HEK293T (cell line): ENCODE measurements at regions of chr19 and their contacts with region 1.

Region 1: DNA sequence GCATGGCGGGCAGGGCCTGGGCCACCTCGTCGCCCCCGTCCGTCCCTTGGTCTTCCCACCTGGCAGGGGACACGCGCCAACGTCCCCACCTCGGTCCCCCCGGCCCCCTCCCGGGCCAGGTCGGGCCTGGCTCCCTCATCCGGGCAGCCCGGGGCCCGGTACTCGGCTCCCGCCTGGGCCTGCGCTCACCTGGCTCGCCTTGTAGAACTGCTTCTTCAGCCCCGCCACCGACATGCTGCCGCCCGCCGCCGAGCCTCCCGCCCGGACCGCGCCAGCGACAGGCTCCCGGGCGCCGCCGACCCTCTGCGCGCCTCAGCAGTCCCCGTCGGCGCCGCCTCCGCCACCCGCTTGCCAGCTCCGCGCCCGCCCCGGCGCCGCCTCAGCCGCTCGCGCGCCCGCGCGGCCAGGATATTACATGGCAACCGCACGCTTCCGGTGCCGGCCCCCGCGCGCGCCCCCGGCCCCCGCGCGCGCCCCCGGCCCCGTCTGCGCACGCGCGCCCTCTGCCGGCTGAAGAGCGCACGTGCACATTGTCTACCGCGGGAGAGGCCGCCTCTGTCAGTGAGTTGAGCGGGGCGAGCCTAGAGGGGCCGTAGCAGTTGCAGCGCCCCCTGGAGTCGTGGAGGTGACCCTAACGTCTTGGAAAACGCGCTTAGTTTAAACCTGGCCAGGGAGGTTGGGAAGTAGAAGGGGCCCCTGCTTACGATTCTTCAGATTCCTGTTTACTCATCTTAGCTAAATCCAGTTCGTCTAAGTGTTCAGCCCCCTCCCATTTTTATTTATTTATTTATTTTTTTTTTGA is at the start of gene SH3GL1:
- DNase-seq: peak; percentile 89

Region 2: GRCh38 chr19:4375164-4376027 is 24.9 kb before region 1 on chr19:
- CTCF ChIA-PET with region 1: interaction called, 13 read pairs
- POLR2A ChIA-PET with region 1: interaction called, 6 read pairs
- DNase-seq: peak; percentile 55

Region 3: DNA sequence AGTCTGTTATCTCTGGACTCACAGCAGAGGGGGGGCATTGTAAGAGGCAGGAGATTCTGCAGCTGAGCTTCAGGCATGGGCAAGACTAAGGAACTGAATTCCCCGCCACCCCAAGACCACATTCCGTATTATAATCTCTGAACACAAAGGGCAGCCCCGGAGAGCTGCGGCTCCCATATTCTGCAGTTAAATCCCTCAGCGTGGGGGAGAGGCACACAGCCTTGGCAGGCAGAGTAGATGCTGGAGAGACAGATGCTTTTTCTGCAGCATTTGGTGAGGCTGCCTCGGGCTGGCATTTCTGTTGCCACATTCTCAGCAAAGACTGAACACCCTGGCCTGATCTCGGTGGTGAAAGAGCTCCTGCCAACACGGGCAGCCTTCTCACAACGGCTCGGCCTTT is 15.0 kb after region 1 on chr19:
- CTCF ChIA-PET with region 1: no interaction called
- POLR2A ChIA-PET with region 1: interaction called, 20 read pairs
- DNase-seq: no peak

Region 4: DNA sequence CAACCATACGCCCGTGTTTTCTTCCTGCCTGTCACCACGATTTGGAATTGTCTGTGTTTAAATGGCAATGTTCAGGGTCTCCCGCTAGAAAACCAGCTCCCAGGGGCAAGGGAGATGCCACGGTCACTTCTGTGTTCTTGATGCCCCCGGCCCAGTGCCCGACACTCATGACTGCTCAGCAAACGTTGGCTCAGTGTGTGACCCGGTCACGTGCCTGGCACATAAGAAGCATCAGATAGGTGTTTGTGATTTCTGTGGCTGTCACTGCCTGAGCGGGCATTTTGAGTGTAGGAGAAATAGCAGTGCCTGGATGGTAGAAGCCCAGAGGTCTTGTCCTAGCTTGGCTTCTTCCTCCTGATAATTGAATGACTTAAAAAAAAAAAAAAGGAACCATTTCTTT is 87.2 kb after region 1 on chr19:
- CTCF ChIA-PET with region 1: no interaction called
- POLR2A ChIA-PET with region 1: no interaction called
- DNase-seq: no peak